CD8-positive, alpha-beta T cell (primary cell): ENCODE measurements at regions of chr2 and their contacts with region 1.

Region 1: DNA sequence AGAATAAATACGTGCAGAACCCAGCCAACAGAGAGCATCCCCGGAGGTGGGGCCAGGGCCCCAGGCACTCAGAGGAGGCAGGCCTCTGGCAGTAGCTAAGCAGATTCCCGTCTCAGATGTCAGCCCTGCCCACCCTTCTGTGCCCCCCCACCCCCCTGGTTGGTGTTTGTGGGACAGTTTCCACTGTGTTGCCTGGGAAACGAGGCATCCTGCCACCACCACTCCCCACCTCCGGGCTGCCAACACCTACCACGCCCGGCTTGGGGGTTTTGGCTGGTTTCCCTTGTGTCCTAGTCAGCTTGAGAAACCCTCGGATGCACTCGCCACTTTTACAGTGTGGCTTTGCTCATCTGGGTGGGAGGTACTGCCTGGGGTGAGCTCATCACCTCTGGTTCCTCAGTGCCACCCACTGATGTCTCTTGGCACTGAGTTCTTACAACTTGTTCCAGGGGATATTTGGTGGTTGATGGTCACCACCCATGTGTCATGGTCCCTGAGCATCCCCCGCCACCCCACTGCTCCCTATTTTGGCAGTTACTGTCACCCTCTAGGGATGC is 72.4 kb upstream of the YWHAQ start:
- DNase-seq: peak; percentile 65 to 98 (median 84)
- ATAC-seq: peak; percentile 88
- H3K4me3 ChIP-seq: no peak overlapping the region
- H3K4me3 Mint-ChIP-seq: no peak overlapping the region
- H3K27ac ChIP-seq: peak overlapping the region; percentile 54 to 91
- H3K27ac Mint-ChIP-seq: peak overlapping the region; percentile 63
- H3K4me1 ChIP-seq: peaks cover 17% of the 10 kb centered on the region
- H3K4me1 Mint-ChIP-seq: peaks cover 28% of the 10 kb centered on the region
- H3K27me3 ChIP-seq: no peaks in the 10 kb centered on the region
- H3K27me3 Mint-ChIP-seq: no peaks in the 10 kb centered on the region
- CTCF ChIP-seq: no peak

Region 2: GRCh38 chr2:9656270-9656766 is 46.8 kb before region 1 on chr2:
- CTCF ChIA-PET with region 1: no interaction called
- POLR2A ChIA-PET with region 1: no interaction called
- intact Hi-C with region 1: loop called (anchors 2 kb)
- DNase-seq: peak; percentile 10 to 89 (median 57)
- ATAC-seq: peak; percentile 81
- H3K4me3 ChIP-seq: no peak overlapping the region
- H3K4me3 Mint-ChIP-seq: peak overlapping the region; percentile 13
- H3K27ac ChIP-seq: peak overlapping the region in 1 of 2 experiments; percentile 36
- H3K27ac Mint-ChIP-seq: peak overlapping the region; percentile 84
- H3K4me1 ChIP-seq: peaks cover 5% of the 10 kb centered on the region
- H3K4me1 Mint-ChIP-seq: peaks cover 9% of the 10 kb centered on the region
- H3K27me3 ChIP-seq: no peaks in the 10 kb centered on the region
- H3K27me3 Mint-ChIP-seq: no peaks in the 10 kb centered on the region
- CTCF ChIP-seq: no peak

Region 3: DNA sequence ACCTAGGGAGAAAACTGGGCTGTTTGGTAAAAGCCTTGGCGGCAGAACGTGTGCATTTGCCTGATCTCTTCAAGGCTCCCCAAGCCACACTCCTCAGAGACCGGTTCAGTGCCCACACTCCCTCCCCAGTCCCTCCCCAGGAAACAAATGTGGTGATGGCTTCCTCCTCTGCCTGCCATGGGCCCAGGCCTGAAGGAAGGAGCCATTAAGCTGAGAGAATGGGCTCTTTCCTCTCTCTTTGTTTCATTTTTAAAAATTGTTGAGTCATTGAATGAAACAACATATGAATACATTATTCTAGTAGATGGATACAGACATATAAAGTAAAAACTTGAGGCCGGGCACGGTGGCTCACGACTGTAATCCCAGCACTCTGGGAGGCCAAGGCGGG is 21.7 kb before region 1 on chr2:
- CTCF ChIA-PET with region 1: no interaction called
- POLR2A ChIA-PET with region 1: no interaction called
- intact Hi-C with region 1: loop called in 1 of 2 experiments (anchors 2 kb)
- DNase-seq: peak in 6 of 9 experiments; percentile 7 to 77 (median 46)
- ATAC-seq: peak; percentile 79
- H3K4me3 ChIP-seq: no peak overlapping the region
- H3K4me3 Mint-ChIP-seq: no peak overlapping the region
- H3K27ac ChIP-seq: peak overlapping the region in 1 of 2 experiments; percentile 75
- H3K27ac Mint-ChIP-seq: peak overlapping the region; percentile 71
- H3K4me1 ChIP-seq: peaks cover 6% of the 10 kb centered on the region
- H3K4me1 Mint-ChIP-seq: peaks cover 9% of the 10 kb centered on the region
- H3K27me3 ChIP-seq: no peaks in the 10 kb centered on the region
- H3K27me3 Mint-ChIP-seq: no peaks in the 10 kb centered on the region
- CTCF ChIP-seq: no peak

Region 4: GRCh38 chr2:9753276-9753600 is 50.1 kb after region 1 on chr2:
- CTCF ChIA-PET with region 1: no interaction called
- POLR2A ChIA-PET with region 1: no interaction called
- intact Hi-C with region 1: loop called in 1 of 2 experiments (anchors 10 kb)
- DNase-seq: peak in 7 of 9 experiments; percentile 11 to 67 (median 50)
- ATAC-seq: peak; percentile 76
- H3K4me3 ChIP-seq: peak overlapping the region in 1 of 2 experiments; percentile 37
- H3K4me3 Mint-ChIP-seq: peak overlapping the region; percentile 73
- H3K27ac ChIP-seq: peak overlapping the region in 1 of 2 experiments; percentile 72
- H3K27ac Mint-ChIP-seq: peak overlapping the region; percentile 89
- H3K4me1 ChIP-seq: peaks cover 35% of the 10 kb centered on the region
- H3K4me1 Mint-ChIP-seq: peaks cover 40% of the 10 kb centered on the region
- H3K27me3 ChIP-seq: peaks cover 5% of the 10 kb centered on the region in 2 experiments
- H3K27me3 Mint-ChIP-seq: peaks cover 27% of the 10 kb centered on the region
- CTCF ChIP-seq: no peak